Ovary (tissue), 10 donors: ENCODE measurements at regions of chr1 and their contacts with region 1.

Region 1: DNA sequence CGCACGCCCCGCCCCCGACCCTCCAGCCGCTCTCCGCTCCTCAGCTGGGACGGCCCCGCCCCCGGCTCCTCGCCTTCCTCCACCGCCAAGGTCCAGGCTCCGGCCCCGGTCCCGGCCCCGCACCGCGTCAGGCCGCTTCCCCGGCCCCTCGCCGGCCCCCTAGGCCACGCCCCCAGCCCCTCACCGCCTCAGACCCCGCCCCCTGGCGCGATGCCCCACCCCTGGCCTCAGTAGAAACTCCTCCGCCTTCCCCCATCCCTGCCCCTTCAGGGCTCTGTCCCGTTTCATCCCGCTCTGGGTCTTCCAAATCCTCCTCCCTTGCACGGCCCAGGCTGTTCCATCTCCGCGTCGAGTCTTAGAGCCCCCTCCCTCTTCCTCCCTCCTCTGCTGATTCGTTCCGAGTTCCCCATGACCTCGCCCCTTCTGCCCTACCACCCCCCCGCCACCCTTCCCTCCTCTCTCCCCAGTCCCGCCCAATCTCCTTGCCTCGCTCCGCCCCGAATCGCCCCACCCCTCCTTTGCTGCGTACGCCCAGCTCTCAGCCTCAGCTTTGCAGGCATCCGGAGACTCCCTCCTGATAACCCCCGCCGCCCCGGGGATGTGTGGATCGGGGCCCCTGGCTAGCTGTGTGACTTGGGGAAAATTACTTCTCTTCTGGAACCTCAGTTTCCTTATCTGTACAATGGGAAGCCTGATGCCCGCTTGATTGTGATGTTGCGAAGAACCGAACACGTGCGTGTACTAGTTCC is 448 bp upstream of the ASAP3 start:
- DNase-seq: peak; percentile 97 to 98 (median 98)
- H3K4me3 ChIP-seq: peak overlapping the region; percentile 95
- H3K27ac ChIP-seq: peak overlapping the region; percentile 64 to 98
- H3K4me1 ChIP-seq: peaks cover 6% of the 10 kb centered on the region
- H3K27me3 ChIP-seq: no peaks in the 10 kb centered on the region
- CTCF ChIP-seq: no peak
- EP300 ChIP-seq: no peak
- POLR2A ChIP-seq: no peak

Region 2: GRCh38 chr1:23422241-23423030 is 62.0 kb before region 1 on chr1:
- intact Hi-C with region 1: loop called in 1 of 4 experiments (anchors 10 kb)
- DNase-seq: peak; percentile 77 to 87 (median 83)
- H3K4me3 ChIP-seq: no peak overlapping the region
- H3K27ac ChIP-seq: peak overlapping the region in 1 of 2 donors; percentile 90
- H3K4me1 ChIP-seq: peaks cover 21% of the 10 kb centered on the region
- H3K27me3 ChIP-seq: no peaks in the 10 kb centered on the region
- CTCF ChIP-seq: no peak
- EP300 ChIP-seq: no peak
- POLR2A ChIP-seq: no peak

Region 3: DNA sequence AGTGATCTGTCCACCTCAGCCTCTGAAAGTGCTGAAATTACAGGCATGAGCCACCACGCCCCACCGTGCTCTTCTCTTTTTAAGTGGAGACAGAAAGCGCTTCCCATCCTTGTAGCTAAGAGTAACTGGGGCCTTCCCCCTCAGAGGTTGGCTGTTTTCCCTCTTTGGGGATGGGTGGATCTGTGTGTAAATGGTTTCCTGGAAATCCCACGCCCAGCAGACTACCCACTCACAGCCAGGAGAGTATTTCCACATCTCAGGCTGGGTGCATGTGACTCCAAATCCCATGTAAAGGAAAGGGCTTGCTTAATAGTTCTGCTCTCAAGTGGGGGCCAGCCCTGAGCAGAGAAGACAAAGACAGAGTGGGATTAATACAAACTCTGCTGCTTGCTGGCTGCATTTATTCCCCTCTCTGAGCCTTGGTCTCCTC is 40.3 kb before region 1 on chr1:
- intact Hi-C with region 1: loop called in 1 of 4 experiments (anchors 5 kb)
- DNase-seq: peak; percentile 60 to 93 (median 74)
- H3K4me3 ChIP-seq: no peak overlapping the region
- H3K27ac ChIP-seq: peak overlapping the region; percentile 31 to 37
- H3K4me1 ChIP-seq: peaks cover 2% of the 10 kb centered on the region
- H3K27me3 ChIP-seq: no peaks in the 10 kb centered on the region
- CTCF ChIP-seq: no peak
- EP300 ChIP-seq: peak; percentile 93
- POLR2A ChIP-seq: peak; percentile 59

Region 4: GRCh38 chr1:23664837-23665795 is 180.7 kb after region 1 on chr1:
- intact Hi-C with region 1: no loop called
- DNase-seq: no peak
- H3K4me3 ChIP-seq: no peak overlapping the region
- H3K27ac ChIP-seq: no peak overlapping the region
- H3K4me1 ChIP-seq: no peaks in the 10 kb centered on the region
- H3K27me3 ChIP-seq: no peaks in the 10 kb centered on the region
- CTCF ChIP-seq: no peak
- EP300 ChIP-seq: no peak
- POLR2A ChIP-seq: no peak